ENCODE measurements at regions of chr6 and their contacts with region 1.

Region 1: GRCh38 chr6:154868143-154868594 is 126.9 kb upstream of the TIAM2 start:
- DNase-seq: peak; percentile 22
- H3K4me3 ChIP-seq: no peak overlapping the region
- H3K27me3 ChIP-seq: no peaks in the 10 kb centered on the region
- CTCF ChIP-seq: peak; percentile 67

Region 2: DNA sequence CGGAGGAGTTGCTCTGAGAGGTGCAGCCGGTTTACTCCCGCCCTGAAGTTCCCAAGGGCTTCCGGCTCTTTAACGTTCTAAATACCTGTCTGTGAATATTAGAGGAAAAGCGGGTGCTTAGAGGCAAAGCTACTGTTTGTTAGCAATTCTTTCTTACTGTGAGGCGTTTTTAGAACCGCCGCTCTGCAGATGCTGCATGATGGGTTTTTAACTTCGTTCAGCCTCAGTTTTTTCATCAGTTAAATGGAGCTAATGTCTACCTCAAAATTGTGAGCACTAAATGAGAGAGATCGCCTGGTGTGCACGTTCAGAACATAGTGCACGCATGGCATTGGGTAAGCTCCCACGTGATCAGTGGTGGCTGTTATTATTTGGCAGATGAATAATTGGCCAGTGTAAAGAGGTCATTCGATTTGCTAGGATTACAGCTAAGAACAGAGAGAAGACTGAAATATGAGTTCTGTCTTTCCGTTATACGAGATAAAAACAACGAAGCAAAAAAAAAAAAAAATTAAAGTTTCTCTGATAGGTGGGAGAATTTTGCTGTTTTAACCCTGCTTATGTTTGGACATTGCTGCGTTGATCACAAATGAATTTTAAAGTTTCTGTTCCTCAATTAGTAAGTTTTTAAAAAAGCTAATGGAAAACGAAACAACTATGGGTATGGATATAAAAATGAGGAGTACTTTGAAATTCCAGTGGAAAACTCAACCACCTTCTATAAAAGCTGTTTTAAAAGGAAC is 446.8 kb after region 1 on chr6:
- CTCF ChIA-PET with region 1: interaction called, 10 read pairs
- POLR2A ChIA-PET with region 1: no interaction called
- DNase-seq: peak; percentile 37
- H3K4me3 ChIP-seq: peak overlapping the region; percentile 75
- H3K27me3 ChIP-seq: no peaks in the 10 kb centered on the region
- CTCF ChIP-seq: no peak